ENCODE measurements at regions of chr6 and their contacts with region 1.

Region 1: DNA sequence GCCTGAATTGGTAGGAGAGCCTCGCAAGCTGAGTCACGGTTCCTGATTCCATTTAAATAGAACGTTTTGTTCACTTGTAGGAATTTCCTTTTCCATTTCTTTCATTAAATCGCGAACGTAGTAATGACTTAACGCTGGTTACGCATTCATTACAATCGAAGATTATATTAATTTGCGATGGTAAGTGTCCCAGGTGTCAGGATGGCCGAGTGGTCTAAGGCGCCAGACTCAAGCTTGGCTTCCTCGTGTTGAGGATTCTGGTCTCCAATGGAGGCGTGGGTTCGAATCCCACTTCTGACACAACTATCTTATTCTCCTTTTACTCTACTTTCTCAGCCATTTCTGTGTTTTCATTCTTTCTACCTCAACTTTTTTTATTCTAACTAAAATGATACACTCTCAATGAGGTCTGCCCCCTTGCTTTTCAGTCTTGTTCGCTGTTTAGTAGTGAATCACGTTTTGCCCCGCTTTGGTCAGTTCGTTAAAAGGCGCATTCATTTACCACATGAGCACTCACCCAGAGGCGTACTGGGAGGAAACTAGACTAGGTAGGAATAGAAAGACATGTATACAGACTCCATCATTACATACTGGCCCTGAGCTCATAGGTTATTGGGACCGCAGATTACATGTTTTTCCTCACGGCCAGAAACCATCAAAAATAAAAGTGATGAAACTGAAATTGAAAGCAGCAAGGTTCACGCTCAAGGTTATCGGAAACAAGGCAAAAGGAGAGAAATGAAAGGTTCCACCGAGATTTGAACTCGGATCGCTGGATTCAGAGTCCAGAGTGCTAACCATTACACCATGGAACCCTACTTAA is 17.3 kb upstream of the TRIM27 start:
- DNase-seq: peak; percentile 94
- H3K4me3 Mint-ChIP-seq: peak overlapping the region; percentile 92
- H3K27ac Mint-ChIP-seq: peak overlapping the region; percentile 96
- H3K4me1 Mint-ChIP-seq: peaks cover 49% of the 10 kb centered on the region
- H3K27me3 Mint-ChIP-seq: peaks cover 7% of the 10 kb centered on the region

Region 2: GRCh38 chr6:27902335-27903314 is 1038.4 kb before region 1 on chr6:
- intact Hi-C with region 1: loop called (anchors 5 kb)
- DNase-seq: peak; percentile 96
- H3K4me3 Mint-ChIP-seq: peak overlapping the region; percentile 85
- H3K27ac Mint-ChIP-seq: peak overlapping the region; percentile 91
- H3K4me1 Mint-ChIP-seq: peaks cover 15% of the 10 kb centered on the region
- H3K27me3 Mint-ChIP-seq: peaks cover 22% of the 10 kb centered on the region

Region 3: GRCh38 chr6:28710466-28711191 is 230.4 kb before region 1 on chr6:
- intact Hi-C with region 1: loop called (anchors 5 kb)
- DNase-seq: no peak
- H3K4me3 Mint-ChIP-seq: peak overlapping the region; percentile 79
- H3K27ac Mint-ChIP-seq: no peak overlapping the region
- H3K4me1 Mint-ChIP-seq: peaks cover 8% of the 10 kb centered on the region
- H3K27me3 Mint-ChIP-seq: peaks cover 31% of the 10 kb centered on the region

Region 4: GRCh38 chr6:28863604-28864320 is 77.3 kb before region 1 on chr6:
- intact Hi-C with region 1: loop called (anchors 1 kb)
- DNase-seq: peak; percentile 96
- H3K4me3 Mint-ChIP-seq: peak overlapping the region; percentile 95
- H3K27ac Mint-ChIP-seq: peak overlapping the region; percentile 83
- H3K4me1 Mint-ChIP-seq: peaks cover 33% of the 10 kb centered on the region
- H3K27me3 Mint-ChIP-seq: peaks cover 18% of the 10 kb centered on the region

Region 5: GRCh38 chr6:28895134-28895812 is 45.8 kb before region 1 on chr6:
- intact Hi-C with region 1: loop called (anchors 1 kb)
- DNase-seq: peak; percentile 97
- H3K4me3 Mint-ChIP-seq: peak overlapping the region; percentile 99
- H3K27ac Mint-ChIP-seq: peak overlapping the region; percentile 100
- H3K4me1 Mint-ChIP-seq: peaks cover 14% of the 10 kb centered on the region
- H3K27me3 Mint-ChIP-seq: peaks cover 7% of the 10 kb centered on the region

Region 6: DNA sequence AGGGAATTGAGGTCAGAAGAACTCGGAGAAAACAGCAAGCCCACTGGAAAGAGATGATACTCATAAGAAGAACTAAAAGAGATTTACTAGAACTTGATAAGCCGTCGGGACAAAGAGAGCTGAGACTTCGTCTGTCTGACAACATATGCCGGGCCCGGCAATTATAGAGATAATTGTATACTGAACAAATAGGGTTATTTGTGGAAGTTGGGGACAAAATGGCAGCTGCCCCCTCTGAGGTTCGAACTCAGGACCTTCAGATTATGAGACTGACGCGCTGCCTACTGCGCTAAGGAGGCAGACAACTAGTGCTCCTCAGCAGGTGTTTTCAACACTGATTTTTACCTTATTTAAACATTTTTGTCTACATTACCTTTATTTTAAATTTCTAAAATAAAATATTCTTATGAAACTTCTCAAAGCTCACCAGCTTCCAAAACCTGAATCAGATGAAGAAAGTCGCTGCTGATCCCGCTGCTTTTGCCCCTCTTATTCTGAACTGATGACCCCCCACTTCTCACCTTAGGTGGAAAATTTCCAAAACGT is 12.0 kb after region 1 on chr6:
- intact Hi-C with region 1: loop called (anchors 1 kb)
- DNase-seq: peak; percentile 83
- H3K4me3 Mint-ChIP-seq: peak overlapping the region; percentile 85
- H3K27ac Mint-ChIP-seq: peak overlapping the region; percentile 65
- H3K4me1 Mint-ChIP-seq: peaks cover 26% of the 10 kb centered on the region
- H3K27me3 Mint-ChIP-seq: peaks cover 16% of the 10 kb centered on the region

Region 7: DNA sequence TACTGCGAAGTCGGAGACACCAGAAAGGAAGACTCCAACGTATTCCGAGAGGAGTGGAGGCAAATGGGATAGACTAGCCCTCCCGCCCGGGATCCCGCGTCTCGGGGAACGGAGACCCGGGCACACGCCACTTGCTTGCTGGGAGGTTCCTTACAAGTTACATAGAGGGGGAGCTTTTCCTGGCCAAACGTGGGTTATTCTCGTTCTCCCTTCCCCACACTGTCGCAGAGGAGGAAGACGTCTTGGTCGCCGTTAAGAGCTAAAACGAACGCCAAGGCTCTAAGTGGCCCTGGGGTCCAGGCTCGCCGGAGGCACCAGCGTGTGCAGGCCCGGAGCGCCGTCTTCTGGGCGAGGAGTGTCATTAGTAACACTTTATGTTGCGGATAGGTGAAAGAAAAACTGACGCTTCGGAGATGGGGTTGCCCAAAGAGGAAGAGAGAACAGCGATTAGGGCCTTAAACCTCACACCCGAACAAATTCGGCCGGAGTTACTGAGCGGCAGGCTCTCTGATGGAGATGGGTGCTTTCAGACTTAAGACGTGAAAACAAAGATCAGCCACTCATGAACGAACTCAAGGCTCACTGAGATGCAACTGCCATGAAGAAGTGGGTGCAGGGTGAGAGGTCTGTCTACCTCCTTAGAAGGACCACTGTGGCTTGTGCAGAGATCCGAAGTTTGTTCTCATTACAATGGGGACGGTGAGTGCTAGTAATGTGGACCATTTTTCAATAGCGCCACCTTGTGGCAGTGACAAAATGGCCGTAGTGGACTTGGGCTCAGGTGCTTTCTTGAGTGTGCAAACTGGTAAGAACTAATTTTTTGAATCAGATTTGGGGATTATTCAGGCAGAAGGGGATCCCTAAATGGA is 75.7 kb after region 1 on chr6:
- intact Hi-C with region 1: loop called (anchors 1 kb)
- DNase-seq: peak; percentile 95
- H3K4me3 Mint-ChIP-seq: peak overlapping the region; percentile 89
- H3K27ac Mint-ChIP-seq: peak overlapping the region; percentile 82
- H3K4me1 Mint-ChIP-seq: peaks cover 12% of the 10 kb centered on the region
- H3K27me3 Mint-ChIP-seq: peaks cover 26% of the 10 kb centered on the region

Measured in activated CD4-positive, alpha-beta T cell treated with anti-CD3 and anti-CD28 coated beads, Interleukin-2, amount 10 ng/mL, durations not matched to agents 24 days and 14 days (primary cell).